ENCODE measurements at regions of chr13 and their contacts with region 1.

Region 1: DNA sequence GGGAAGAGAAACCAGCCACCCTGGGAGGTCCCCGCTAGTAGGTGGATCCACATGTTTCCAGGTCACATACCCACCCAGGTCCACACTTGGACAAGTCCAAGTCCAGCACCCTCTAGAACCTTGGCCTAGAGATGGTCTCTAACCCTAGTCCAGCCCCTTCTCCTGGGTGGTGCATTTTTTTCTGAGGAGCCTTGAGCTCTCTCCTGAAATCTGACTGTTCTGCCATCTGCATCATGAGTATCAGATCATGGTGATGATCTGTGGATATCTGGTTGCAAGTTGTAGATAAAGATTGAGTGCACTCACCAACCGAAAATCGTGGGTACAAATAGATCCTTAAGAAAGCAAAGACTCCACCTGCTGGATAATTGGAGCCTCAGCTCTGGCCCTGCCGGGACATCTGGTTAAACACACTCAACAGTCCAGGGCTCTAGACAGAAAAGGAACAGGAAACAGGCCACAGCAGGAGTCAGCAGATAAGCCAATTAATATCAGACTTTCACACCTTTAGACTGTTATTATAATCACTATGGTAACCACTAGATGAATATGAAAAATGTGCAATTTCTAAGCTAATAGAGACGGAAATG is 41.1 kb downstream of the GPR12 start:
- DNase-seq: no peak
- ATAC-seq: no peak

Region 2: GRCh38 chr13:26646603-26647002 is 72.8 kb before region 1 on chr13:
- intact Hi-C with region 1: no loop called
- DNase-seq: no peak
- ATAC-seq: no peak

Region 3: DNA sequence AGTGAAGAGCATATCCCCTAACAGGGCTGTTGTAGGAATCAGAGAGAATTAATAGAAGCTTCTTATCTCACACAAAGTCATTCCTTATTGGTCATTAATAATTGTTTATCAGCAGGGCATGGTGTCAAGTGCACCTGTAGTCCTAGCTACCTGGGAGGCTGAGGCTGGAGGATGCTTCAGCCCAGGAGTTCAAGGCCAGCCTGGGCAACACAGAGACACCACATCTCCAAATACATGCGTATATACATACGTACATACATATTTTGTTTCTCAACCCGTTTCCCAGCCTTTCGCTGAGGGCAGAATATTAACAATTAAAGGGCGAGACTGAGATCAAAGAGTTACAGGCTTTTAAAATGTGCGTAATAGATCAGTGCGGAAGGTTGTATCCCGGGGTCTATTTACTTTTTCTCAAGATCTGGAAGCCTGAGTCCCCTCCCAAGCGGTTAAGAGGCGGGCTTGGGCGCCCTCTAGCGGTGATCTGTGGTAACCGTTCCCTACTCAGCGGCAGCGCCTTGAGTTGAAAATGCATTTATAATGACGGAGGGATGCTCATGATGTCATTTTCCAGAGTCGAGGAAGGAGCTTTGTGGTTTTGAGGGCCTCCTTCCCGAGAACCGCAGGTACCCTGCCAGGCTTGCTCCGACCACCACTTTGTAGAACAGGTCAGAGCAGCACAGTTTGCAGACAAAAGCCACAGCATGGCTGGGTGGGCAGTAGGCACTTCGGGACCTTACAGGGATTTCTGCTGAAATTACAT is 210.7 kb after region 1 on chr13:
- intact Hi-C with region 1: loop called in 1 of 2 experiments (anchors 10 kb)
- DNase-seq: peak in 1 of 2 donors; percentile 73
- ATAC-seq: peak; percentile 75

Region 4: DNA sequence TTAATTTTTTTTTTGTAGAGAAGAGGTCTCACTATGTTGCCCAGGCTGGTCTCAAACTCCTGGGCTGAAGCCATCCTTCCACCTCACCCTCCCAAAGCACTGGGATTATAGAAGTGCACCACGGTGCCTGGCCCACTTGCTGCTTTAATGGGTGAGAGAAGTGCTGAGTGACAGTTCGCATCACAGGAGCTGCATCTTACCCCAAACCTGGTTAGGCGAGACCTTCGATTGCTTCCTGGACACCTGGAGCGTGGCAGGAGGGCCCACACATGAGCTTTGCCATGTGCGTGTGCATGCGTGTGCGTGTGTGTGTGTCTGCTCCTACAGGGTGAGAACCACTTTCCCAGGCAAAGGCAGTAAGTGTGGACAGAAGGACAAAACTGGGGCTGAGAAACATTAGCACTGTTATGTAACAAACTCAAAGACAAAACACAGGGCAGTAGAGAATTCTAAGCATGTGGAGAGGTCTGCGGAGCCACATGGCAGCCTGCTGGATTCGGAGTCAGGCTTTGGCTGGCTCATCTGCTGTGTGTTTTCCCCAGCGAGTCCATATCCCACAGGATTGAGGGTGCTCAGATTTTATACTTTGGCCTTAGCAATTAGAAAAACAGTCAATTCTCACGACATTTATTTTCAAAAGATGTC is 742.6 kb after region 1 on chr13:
- intact Hi-C with region 1: no loop called
- DNase-seq: no peak
- ATAC-seq: no peak